ENCODE measurements at regions of chr10 and their contacts with region 1.

Region 1: DNA sequence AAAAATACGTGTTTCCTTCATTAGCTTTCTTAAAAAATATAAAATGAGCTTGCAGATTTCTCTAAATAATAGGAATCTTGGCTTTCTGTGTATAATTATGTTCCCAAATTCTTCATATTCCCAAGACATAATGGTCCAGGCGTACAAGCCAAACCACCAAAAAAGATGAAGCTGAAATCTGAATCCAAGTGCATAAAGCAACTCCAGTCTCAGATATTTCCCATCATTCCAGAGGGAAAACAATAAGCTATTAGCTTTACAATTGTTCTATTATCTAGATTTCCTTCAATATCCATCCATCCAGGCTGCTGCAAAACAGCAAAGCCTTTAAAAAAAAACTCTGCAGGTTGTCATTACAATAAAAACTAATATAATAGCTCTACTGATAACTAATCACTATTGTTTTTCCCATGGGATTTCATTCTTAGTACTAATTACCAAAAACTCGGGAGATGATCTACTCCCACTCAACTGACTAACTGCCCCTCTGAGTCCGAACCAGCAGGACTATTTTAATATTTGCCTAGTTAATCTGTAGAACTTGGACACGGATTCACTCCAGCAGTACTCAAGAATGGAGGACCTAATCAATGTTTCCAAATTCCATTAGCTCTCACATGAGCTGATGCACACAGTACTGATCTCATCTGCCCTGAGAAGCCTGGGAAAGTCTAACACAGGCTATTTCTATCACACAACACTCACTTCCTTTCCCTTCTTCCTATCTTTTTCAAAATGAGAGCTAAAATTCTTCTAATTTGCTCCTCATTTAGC is 108.9 kb upstream of the ASAH2 start:
- DNase-seq: no peak
- ATAC-seq: peak; percentile 65

Region 2: GRCh38 chr10:50341987-50342386 is 18.3 kb before region 1 on chr10:
- intact Hi-C with region 1: loop called (anchors 1 kb)
- DNase-seq: no peak
- ATAC-seq: no peak